ENCODE measurements at regions of chr9 and their contacts with region 1.

Region 1: DNA sequence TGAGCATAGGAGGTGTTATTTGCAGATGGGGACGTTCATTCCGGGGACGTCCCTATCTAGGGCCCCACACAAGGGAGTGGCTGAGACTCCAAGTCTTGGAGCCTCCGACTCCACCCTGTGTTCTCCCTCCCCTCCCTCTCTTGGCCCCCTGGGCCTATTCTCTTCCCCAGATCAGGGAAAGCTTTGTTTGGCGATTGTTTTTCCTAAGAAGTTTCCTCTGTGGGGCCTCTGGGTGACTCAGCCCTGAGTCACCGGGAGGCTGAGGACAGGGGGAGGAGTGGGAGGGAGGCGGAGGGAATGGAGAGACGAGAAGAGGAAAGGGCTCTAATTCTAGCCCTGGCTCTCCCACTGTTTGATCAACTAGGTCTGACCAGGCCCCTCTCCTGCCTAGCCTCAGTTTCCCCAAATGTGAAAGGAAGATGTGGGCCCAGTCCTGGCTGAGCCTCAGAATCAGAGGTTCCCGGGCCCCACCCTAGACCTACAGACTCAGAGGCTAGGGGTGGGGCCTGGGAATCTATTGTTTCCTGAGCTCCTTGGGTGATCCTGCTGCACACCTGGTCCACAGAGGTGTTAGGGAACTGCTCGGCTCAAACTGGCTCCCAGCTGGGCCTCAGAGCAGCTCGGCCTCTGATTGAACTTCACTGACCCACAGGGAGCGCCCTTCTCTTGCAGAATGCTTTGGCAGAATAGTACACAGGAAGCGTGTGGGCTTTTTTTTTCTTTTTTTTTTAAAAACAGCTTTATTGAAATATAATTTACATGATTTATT is 19.2 kb downstream of the GSN start:
- DNase-seq: peak; percentile 99
- H3K4me3 ChIP-seq: peak overlapping the region; percentile 7
- H3K27ac ChIP-seq: peak overlapping the region; percentile 89
- H3K4me1 ChIP-seq: peaks cover 84% of the 10 kb centered on the region
- H3K27me3 ChIP-seq: no peaks in the 10 kb centered on the region
- CTCF ChIP-seq: peak; percentile 36; the same call in 1 of the 2 replicates

Region 2: DNA sequence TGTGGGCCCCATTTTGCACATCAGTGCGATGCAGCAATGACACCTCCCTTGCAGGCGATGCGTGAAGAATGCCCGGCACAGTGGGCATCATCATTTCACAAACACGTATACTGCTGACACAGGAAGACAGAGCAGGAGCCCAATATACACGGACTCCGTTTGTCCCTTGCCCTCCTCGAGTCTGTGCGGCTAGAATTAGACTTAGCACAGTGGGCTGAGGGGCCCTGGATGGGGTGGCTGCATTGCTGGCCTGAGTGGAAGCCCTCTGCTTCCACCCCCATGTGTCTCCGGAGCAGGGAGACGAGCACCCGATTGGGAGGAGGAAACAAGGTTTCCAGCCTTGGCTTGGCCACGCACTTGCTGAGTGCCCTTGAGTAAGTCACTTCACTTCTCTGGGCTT is 21.6 kb after region 1 on chr9:
- CTCF ChIA-PET with region 1: no interaction called
- POLR2A ChIA-PET with region 1: no interaction called
- intact Hi-C with region 1: no loop called
- DNase-seq: no peak
- H3K4me3 ChIP-seq: no peak overlapping the region
- H3K27ac ChIP-seq: no peak overlapping the region
- H3K4me1 ChIP-seq: no peaks in the 10 kb centered on the region
- H3K27me3 ChIP-seq: no peaks in the 10 kb centered on the region
- CTCF ChIP-seq: no peak

Region 3: DNA sequence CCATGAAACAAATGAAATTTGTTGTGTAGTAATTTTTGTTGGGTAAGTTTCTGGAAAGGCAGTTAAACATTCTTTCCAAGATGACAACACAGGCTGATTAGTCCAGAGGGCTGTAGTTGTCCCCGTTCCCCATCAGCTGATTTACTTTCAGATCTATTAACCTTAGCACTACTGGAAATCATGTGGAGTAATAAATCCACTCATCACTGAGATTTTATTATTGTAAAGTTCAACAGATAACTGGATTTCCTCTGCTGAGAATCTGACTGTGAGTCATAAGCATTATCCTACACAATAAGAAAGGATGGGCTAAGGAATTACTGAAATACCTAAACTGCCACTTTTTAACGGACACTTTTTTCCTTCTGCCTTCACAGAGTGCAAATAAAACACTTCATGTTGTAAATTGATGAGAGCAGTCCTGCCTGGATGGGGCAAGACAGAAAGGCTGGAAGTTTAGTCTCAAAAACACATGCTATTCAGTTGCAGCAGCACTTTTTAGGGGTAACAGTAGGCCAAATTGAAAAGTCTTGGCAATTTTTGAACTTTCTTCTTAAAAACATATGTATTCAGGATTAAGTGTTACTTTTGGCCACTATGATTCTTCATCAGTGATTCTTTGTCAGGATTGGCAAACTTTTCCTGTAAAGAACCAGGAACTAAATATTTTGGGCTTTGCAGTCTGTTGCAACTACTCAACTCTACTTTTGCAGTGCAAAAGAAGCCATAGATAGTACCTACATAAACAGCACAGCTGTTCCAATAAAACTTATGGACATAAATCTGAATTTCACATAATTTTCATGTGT is 75.9 kb after region 1 on chr9:
- CTCF ChIA-PET with region 1: no interaction called
- POLR2A ChIA-PET with region 1: no interaction called
- intact Hi-C with region 1: loop called (anchors 5 kb)
- DNase-seq: peak; percentile 89
- H3K4me3 ChIP-seq: peak overlapping the region; percentile 1
- H3K27ac ChIP-seq: peak overlapping the region; percentile 80
- H3K4me1 ChIP-seq: peaks cover 94% of the 10 kb centered on the region
- H3K27me3 ChIP-seq: no peaks in the 10 kb centered on the region
- CTCF ChIP-seq: no peak

Region 4: DNA sequence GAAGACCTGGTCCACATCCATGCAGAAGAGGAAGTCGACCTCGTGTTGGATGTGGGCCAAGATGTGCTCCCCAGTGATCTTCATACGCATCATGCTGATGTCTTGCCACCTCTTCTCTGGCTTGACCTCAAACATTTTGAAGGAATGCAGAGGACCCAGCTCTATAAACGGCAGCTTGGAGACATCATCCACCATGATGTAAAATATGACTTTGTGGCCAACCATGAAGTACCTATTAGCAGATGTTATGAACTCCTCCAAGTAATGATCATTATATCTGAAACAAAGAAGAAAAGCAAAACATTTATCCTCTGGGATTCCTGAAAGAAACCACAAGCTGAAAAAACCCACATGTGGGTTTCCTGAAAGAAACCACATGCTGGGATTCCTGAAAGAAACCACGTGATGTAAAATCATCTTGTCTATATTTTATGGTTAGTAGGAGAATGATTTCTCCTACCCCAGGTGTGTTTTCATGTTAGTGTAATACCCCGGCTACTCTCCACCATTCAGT is 160.2 kb after region 1 on chr9:
- CTCF ChIA-PET with region 1: no interaction called
- POLR2A ChIA-PET with region 1: no interaction called
- intact Hi-C with region 1: no loop called
- DNase-seq: peak; percentile 56
- H3K4me3 ChIP-seq: no peak overlapping the region
- H3K27ac ChIP-seq: no peak overlapping the region
- H3K4me1 ChIP-seq: peaks cover 7% of the 10 kb centered on the region
- H3K27me3 ChIP-seq: peaks cover 14% of the 10 kb centered on the region
- CTCF ChIP-seq: no peak

Measured in A673 (cell line).